PC-3 (cell line): ENCODE measurements at regions of chr1 and their contacts with region 1.

Region 1: GRCh38 chr1:227111782-227112181 is 171.7 kb downstream of the COQ8A start:
- DNase-seq: no peak
- ATAC-seq: no peak
- H3K4me3 ChIP-seq: no peak overlapping the region
- H3K27ac ChIP-seq: no peak overlapping the region
- H3K4me1 ChIP-seq: no peaks in the 10 kb centered on the region
- H3K27me3 ChIP-seq: no peaks in the 10 kb centered on the region
- CTCF ChIP-seq: no peak

Region 2: GRCh38 chr1:227125929-227126545 is 14.3 kb after region 1 on chr1:
- CTCF ChIA-PET with region 1: no interaction called
- POLR2A ChIA-PET with region 1: no interaction called
- intact Hi-C with region 1: loop called (anchors 1 kb)
- DNase-seq: no peak
- ATAC-seq: no peak
- H3K4me3 ChIP-seq: no peak overlapping the region
- H3K27ac ChIP-seq: no peak overlapping the region
- H3K4me1 ChIP-seq: no peaks in the 10 kb centered on the region
- H3K27me3 ChIP-seq: no peaks in the 10 kb centered on the region
- CTCF ChIP-seq: no peak